ENCODE measurements at regions of chr3 and their contacts with region 1.

Region 1: DNA sequence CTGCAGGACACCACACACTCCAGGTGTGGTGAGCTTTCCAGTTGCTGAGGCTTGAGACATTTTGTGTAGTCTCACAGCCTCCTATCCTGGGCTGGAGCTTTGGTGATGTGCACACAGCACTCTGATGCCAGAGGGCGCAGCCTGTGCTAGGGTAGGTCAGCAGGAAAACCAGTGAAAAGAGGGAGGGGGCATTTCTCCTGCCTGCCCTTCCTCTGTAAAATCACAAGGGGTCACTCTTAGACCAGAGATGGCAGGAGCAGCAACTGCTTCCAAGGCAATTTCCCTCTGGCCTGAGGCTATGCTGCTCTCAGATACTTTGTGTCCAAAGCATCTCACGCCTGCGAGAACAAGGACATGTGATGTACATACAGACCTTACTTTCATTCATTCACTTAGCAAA is 16.5 kb upstream of the MUSTN1 start:
- DNase-seq: peak; percentile 61
- H3K4me3 Mint-ChIP-seq: no peak overlapping the region
- H3K27ac Mint-ChIP-seq: no peak overlapping the region
- H3K4me1 Mint-ChIP-seq: no peaks in the 10 kb centered on the region
- H3K27me3 Mint-ChIP-seq: no peaks in the 10 kb centered on the region
- CTCF ChIP-seq: peak; percentile 66

Region 2: GRCh38 chr3:52939600-52939999 is 88.3 kb after region 1 on chr3:
- CTCF ChIA-PET with region 1: no interaction called
- POLR2A ChIA-PET with region 1: no interaction called
- intact Hi-C with region 1: no loop called
- DNase-seq: no peak
- H3K4me3 Mint-ChIP-seq: no peak overlapping the region
- H3K27ac Mint-ChIP-seq: no peak overlapping the region
- H3K4me1 Mint-ChIP-seq: no peaks in the 10 kb centered on the region
- H3K27me3 Mint-ChIP-seq: no peaks in the 10 kb centered on the region
- CTCF ChIP-seq: no peak

Region 3: DNA sequence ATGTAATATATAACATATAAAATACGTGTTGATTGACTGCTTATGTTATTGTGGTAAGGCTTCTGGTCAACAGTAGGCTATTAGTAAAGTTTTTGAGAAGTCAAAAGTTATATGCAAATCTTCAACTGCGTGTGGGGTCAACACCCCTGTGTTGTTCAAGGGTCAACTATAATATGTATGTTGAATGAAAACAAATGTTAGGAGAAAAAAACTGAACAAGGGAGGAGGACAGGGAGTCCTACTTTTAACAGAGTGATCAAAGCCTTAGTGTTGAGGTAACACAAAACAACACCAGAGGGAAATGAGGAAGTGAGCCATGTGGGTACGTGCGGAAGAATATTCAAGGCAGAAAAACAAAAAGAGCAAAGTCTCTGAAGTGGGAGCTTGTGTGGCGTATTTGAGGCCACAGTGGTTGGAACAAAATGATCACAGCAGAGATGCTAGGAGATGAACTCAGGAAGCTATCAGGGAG is 132.0 kb after region 1 on chr3:
- CTCF ChIA-PET with region 1: interaction called, 5 read pairs
- POLR2A ChIA-PET with region 1: no interaction called
- intact Hi-C with region 1: loop called (anchors 1 kb)
- DNase-seq: no peak
- H3K4me3 Mint-ChIP-seq: no peak overlapping the region
- H3K27ac Mint-ChIP-seq: no peak overlapping the region
- H3K4me1 Mint-ChIP-seq: peaks cover 19% of the 10 kb centered on the region
- H3K27me3 Mint-ChIP-seq: no peaks in the 10 kb centered on the region
- CTCF ChIP-seq: no peak

Measured in MCF 10A (cell line).